ENCODE measurements at regions of chr19 and their contacts with region 1.

Region 1: DNA sequence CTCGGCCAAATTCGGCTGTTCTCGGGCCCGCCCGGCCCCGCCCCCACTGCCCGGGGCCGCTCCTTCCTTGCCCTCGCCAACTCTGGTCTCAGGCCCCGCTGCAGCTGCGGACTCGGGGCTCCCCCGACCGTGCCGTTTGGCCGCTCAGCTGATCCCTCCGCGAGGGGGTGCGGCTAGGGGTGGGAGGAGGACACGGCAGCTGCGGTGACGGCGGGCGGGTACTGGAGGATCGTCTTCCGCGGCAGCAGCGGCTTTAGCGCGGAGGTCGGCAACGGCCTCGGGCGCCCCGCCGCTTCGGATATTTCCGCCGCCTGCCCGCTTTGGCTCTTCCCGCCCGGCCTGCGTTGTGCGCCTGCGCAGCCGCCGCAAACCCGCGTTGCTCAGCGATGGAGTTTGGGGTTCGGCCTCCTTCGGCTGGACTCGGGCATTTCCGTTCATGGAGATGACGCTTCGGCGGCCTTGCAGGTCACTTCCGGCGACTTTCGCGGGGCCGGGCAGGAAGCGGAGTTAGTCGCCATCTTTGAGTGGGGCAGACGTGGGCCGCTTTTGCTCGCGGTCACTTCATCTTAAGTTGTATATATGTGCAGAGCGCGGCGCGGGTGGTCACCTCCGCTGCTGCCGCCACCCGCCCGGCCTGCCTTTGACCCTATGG is 338 bp upstream of the UBE2M start:
- DNase-seq: peak; percentile 100
- ATAC-seq: peak; percentile 69
- H3K4me3 Mint-ChIP-seq: peak overlapping the region; percentile 98
- H3K27ac Mint-ChIP-seq: peak overlapping the region; percentile 99
- H3K4me1 Mint-ChIP-seq: peaks cover 53% of the 10 kb centered on the region
- H3K27me3 Mint-ChIP-seq: no peaks in the 10 kb centered on the region
- CTCF ChIP-seq: no peak

Region 2: GRCh38 chr19:58451358-58452101 is 107.2 kb before region 1 on chr19 and contains the start of gene ZNF324B:
- CTCF ChIA-PET with region 1: no interaction called
- POLR2A ChIA-PET with region 1: no interaction called
- intact Hi-C with region 1: no loop called
- DNase-seq: peak; percentile 98
- ATAC-seq: peak; percentile 98
- H3K4me3 Mint-ChIP-seq: peak within 1 kb of the TSS; percentile 84
- H3K27ac Mint-ChIP-seq: peak within 1 kb of the TSS; percentile 61
- H3K4me1 Mint-ChIP-seq: peaks cover 26% of the 10 kb centered on the region
- H3K27me3 Mint-ChIP-seq: peaks cover 13% of the 10 kb centered on the region
- CTCF ChIP-seq: no peak
- total RNA-seq, gene ZNF324B: 7.6 to 8.2 TPM

Region 3: GRCh38 chr19:58543826-58544590 is 14.7 kb before region 1 on chr19 and contains the start of gene TRIM28:
- CTCF ChIA-PET with region 1: interaction called, 4 read pairs
- POLR2A ChIA-PET with region 1: interaction called, 80 read pairs
- intact Hi-C with region 1: no loop called
- DNase-seq: peak; percentile 100
- ATAC-seq: peak; percentile 97
- H3K4me3 Mint-ChIP-seq: peak within 1 kb of the TSS; percentile 96
- H3K27ac Mint-ChIP-seq: peak within 1 kb of the TSS; percentile 97
- H3K4me1 Mint-ChIP-seq: peaks cover 32% of the 10 kb centered on the region
- H3K27me3 Mint-ChIP-seq: peaks cover 14% of the 10 kb centered on the region
- CTCF ChIP-seq: no peak
- total RNA-seq, gene TRIM28: 527 to 550 TPM

Region 4: DNA sequence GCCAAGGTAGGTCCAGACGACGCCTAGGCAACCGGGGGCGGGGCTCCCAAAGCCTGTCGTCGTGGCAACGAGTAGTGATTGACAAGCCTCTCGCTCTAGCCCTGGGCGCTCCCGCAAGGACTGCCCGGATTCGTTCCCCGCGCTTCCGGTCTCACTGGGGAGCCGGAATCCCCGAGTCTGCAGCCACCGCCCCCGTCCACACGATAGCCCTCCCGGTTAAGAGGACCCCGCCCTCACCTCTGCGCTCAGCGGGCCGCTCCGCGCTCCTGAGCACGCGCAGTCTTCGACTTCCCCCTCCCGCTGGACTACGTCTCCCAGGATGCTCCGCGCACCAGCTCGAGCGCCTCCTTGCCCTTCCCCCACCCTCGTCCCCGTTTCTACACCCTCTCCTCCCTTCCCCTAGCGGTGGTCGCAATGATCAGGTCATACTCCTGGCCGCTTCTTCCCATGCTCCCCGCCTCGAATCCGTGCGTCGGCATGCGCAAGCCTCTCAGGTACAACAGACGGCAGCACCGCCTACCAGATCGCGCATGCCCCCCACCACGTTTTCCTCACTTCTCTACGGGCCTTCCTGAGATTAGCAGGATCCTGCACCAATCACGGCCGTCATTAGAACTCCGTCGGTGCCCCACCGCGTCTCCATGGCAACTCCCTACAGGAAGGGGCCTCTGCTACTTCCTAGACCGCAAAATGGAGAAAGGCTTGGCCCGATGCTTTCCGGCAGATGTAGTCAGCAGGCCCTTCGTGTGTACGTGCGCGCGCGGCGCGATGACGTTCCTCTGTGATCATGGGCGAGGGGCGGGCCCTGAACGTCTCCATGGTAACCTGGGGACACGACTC is 14.3 kb after region 1 on chr19 and contains the start of gene MZF1:
- CTCF ChIA-PET with region 1: interaction called, 6 read pairs
- POLR2A ChIA-PET with region 1: interaction called, 29 read pairs
- intact Hi-C with region 1: no loop called
- DNase-seq: peak; percentile 100
- ATAC-seq: peak; percentile 68
- H3K4me3 Mint-ChIP-seq: peak within 1 kb of the TSS; percentile 84
- H3K27ac Mint-ChIP-seq: peak within 1 kb of the TSS; percentile 100
- H3K4me1 Mint-ChIP-seq: peaks cover 42% of the 10 kb centered on the region
- H3K27me3 Mint-ChIP-seq: no peaks in the 10 kb centered on the region
- CTCF ChIP-seq: no peak
- total RNA-seq, gene MZF1: 12.1 to 13.4 TPM

Region 5: DNA sequence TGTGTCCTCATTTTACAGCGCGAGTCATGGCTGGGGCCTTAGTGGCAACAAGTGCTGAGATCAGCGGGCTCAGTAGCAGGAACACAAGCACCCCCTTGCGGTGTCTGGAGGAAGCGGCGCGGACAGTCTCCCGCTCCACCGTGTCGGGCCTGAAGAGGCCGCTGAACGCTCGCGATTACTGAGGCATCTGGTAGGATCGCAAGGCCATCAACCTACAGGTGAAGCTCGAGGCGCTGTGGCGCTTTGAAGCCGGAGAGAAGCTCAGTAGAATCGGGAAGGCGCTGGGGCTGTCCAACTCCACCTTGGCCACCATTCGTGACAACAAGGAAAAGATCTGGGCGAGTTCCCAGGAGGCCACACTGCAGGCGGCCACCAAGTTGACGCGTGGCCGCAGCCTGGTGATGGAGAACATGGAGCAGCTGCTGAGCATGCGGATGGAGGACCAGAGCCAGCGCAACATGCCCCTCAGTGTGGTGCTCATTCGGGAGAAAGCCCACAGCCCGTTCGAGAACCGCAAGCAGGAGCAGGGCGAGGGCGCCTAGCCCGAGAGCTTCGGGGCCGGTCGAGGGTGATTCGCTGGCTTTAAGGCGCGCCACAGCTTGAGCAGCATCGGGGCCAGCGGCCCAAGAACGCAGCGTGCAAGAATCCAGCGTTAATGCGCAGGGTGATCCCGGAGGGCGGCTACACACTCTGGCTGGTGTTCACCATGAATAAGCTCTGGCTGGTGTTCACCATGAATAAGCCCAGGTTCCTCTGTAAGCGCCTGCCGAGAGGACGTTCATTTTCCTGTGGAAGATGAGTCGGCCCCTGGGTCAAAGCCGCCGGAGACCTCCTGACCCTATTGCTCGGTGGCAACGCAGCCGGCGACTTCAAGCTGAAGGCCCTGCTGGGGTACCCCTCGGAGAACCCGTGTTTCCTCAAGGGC is 22.7 kb after region 1 on chr19:
- CTCF ChIA-PET with region 1: interaction called, 10 read pairs
- POLR2A ChIA-PET with region 1: interaction called, 17 read pairs
- intact Hi-C with region 1: no loop called
- DNase-seq: peak; percentile 96
- ATAC-seq: peak; percentile 100
- H3K4me3 Mint-ChIP-seq: no peak overlapping the region
- H3K27ac Mint-ChIP-seq: peak overlapping the region; percentile 84
- H3K4me1 Mint-ChIP-seq: peaks cover 33% of the 10 kb centered on the region
- H3K27me3 Mint-ChIP-seq: no peaks in the 10 kb centered on the region
- CTCF ChIP-seq: peak; percentile 97

Measured in activated CD8-positive, alpha-beta T cell treated with anti-CD3 and anti-CD28 coated beads for 36 hours (primary cell).